Dendritic cell treated with granulocyte-macrophage colony-stimulating factor and Interleukin-4, amounts not matched to agents 40 ng/mL and 50 ng/mL, for 4 days (primary cell): ENCODE measurements at regions of chr2 and their contacts with region 1.

Region 1: GRCh38 chr2:169038338-169038757 is 7.2 kb upstream of the ABCB11 start:
- H3K4me3 Mint-ChIP-seq: no peak overlapping the region
- H3K27ac Mint-ChIP-seq: peak overlapping the region; percentile 68
- H3K4me1 Mint-ChIP-seq: peaks cover 40% of the 10 kb centered on the region
- H3K27me3 Mint-ChIP-seq: no peaks in the 10 kb centered on the region

Region 2: DNA sequence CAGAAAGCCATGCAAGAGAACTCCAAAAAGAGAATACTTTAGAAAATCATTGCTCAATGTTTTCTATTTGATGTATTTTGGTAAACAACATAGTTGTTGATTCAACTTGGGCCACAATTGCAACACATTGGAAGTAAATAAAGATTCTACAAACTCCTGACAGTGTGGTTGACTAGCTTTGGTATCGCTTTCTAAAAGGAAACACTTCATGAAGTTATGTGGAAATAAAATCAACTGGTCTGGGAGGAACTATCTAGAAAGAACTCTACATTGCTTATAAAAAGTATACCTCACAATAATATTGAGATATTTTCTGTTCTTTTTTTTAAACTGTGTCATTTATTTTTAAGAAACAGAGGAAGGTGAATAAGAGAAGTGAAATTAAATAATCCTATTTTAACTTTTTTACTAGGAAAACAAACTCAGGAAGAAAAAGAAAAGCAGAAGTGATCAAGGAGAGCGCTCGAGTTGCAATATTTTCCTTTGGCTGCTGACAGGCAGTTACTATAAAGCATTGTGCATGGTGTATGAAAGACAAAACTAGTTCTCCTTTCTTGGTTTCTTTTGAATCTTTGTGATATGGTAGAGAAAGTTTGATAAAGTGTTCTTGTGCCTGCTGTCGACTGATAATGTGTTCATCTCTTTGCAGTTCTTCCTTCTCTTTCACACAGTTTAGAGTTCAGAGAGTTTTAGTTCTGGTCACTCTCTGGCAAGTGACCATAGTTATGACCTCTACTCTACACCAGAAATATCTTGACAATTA is 34.0 kb after region 1 on chr2:
- intact Hi-C with region 1: loop called (anchors 1 kb)
- H3K4me3 Mint-ChIP-seq: no peak overlapping the region
- H3K27ac Mint-ChIP-seq: peak overlapping the region; percentile 86
- H3K4me1 Mint-ChIP-seq: peaks cover 75% of the 10 kb centered on the region
- H3K27me3 Mint-ChIP-seq: no peaks in the 10 kb centered on the region